Ovary (tissue), 10 donors: ENCODE measurements at regions of chr17 and their contacts with region 1.

Region 1: DNA sequence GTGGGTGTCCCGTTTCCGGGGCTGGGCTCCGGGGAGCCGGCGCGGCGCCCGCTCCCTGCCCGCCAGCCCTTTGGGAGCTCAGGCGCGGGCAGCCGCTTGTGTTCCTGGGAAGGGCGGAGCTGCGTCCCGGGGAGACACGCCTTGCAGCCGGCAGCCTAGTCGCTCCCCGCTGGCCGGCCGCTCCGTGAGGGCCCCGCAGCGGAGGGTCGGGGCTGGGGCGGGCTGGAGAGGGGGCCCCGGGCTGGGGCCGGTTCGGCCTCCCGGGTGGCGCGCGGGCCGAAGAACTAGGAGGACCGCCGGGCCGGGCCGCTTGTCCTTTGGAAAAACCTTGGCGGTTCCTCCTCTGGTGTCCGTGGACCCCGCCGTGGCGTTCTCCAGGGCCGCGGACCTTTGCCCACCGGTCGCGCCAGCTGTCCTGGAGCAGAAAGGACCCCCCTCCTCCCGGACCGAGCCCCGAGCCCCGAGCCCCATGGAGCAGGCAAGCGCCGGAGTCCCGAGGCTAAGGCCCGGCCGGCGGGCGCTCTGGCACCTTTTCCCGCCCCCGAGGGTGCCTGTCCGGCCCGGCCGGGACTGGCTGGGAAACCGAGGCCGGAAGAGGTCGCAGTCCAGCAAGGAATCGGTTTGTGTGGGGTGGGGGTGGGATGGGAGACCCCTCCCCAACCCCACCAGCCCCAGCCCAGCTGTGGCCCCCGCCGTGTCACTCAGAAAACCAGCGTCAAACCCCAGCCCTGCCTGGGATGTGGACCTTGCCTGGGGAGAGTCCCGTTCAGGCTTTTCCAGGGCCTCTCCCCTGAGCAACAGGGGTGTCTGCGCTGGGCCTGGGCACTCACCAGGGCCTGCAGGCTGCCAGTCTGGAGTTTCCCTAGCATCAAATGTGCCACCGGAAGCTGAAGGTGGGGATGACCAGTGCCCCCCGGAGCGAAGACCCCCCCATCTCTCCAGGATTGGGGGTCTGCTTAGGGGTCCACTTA is 6.8 kb upstream of the TBC1D3B start:
- DNase-seq: peak; percentile 46 to 80 (median 71)
- H3K4me3 ChIP-seq: peak overlapping the region; percentile 54
- H3K27ac ChIP-seq: peak overlapping the region; percentile 64 to 70
- H3K4me1 ChIP-seq: peaks cover 8% of the 10 kb centered on the region
- H3K27me3 ChIP-seq: no peaks in the 10 kb centered on the region
- CTCF ChIP-seq: no peak
- EP300 ChIP-seq: no peak
- POLR2A ChIP-seq: no peak

Region 2: GRCh38 chr17:36111068-36111490 is 72.2 kb before region 1 on chr17:
- intact Hi-C with region 1: loop called in 2 of 4 experiments (anchors 5 kb)
- DNase-seq: no peak
- H3K4me3 ChIP-seq: no peak overlapping the region
- H3K27ac ChIP-seq: no peak overlapping the region
- H3K4me1 ChIP-seq: no peaks in the 10 kb centered on the region
- H3K27me3 ChIP-seq: no peaks in the 10 kb centered on the region
- CTCF ChIP-seq: no peak
- EP300 ChIP-seq: no peak
- POLR2A ChIP-seq: no peak

Region 3: GRCh38 chr17:36127199-36127893 is 55.9 kb before region 1 on chr17:
- intact Hi-C with region 1: loop called in 1 of 4 experiments (anchors 5 kb)
- DNase-seq: no peak
- H3K4me3 ChIP-seq: no peak overlapping the region
- H3K27ac ChIP-seq: no peak overlapping the region
- H3K4me1 ChIP-seq: no peaks in the 10 kb centered on the region
- H3K27me3 ChIP-seq: no peaks in the 10 kb centered on the region
- CTCF ChIP-seq: no peak
- EP300 ChIP-seq: no peak
- POLR2A ChIP-seq: no peak

Region 4: DNA sequence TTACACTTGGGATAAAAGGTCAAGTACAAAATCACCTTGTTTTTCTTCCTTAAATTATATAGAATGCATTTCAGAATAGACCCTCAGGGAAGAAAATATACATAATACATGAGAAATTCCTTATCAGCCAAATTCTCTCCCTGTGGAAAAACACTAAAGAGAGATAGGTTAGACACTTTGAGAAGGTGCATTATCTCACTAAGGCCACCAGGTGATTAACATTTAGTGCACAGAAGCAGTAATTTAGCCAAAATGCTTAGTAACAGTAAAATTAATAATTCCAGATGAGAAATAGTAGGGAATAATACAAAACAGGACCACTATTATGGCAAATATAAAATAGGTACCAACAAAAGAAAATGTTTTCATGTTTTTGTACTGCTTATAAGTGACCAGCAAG is 1007.2 kb after region 1 on chr17:
- intact Hi-C with region 1: no loop called
- DNase-seq: no peak
- H3K4me3 ChIP-seq: no peak overlapping the region
- H3K27ac ChIP-seq: no peak overlapping the region
- H3K4me1 ChIP-seq: no peaks in the 10 kb centered on the region
- H3K27me3 ChIP-seq: no peaks in the 10 kb centered on the region
- CTCF ChIP-seq: no peak
- EP300 ChIP-seq: no peak
- POLR2A ChIP-seq: no peak